Activated CD4-positive, alpha-beta T cell treated with anti-CD3 and anti-CD28 coated beads for 36 hours (primary cell): ENCODE measurements at regions of chr17 and their contacts with region 1.

Region 1: GRCh38 chr17:36545465-36546417 is 1.0 kb downstream of the GGNBP2 start:
- DNase-seq: peak; percentile 98
- ATAC-seq: peak; percentile 81
- H3K4me3 Mint-ChIP-seq: peak overlapping the region; percentile 96
- H3K27ac Mint-ChIP-seq: peak overlapping the region; percentile 95
- H3K4me1 Mint-ChIP-seq: peaks cover 37% of the 10 kb centered on the region
- H3K27me3 Mint-ChIP-seq: no peaks in the 10 kb centered on the region

Region 2: GRCh38 chr17:35373534-35373983 is 1172.2 kb before region 1 on chr17 and contains the start of gene SLFN11:
- CTCF ChIA-PET with region 1: no interaction called
- POLR2A ChIA-PET with region 1: no interaction called
- intact Hi-C with region 1: loop called in 1 of 2 experiments (anchors 10 kb)
- DNase-seq: peak; percentile 95
- ATAC-seq: peak; percentile 70
- H3K4me3 Mint-ChIP-seq: peak within 1 kb of the TSS; percentile 85
- H3K27ac Mint-ChIP-seq: peak within 1 kb of the TSS; percentile 98
- H3K4me1 Mint-ChIP-seq: peaks cover 50% of the 10 kb centered on the region
- H3K27me3 Mint-ChIP-seq: peaks cover 1% of the 10 kb centered on the region
- total RNA-seq, gene SLFN11: 63.7 to 67.9 TPM

Region 3: DNA sequence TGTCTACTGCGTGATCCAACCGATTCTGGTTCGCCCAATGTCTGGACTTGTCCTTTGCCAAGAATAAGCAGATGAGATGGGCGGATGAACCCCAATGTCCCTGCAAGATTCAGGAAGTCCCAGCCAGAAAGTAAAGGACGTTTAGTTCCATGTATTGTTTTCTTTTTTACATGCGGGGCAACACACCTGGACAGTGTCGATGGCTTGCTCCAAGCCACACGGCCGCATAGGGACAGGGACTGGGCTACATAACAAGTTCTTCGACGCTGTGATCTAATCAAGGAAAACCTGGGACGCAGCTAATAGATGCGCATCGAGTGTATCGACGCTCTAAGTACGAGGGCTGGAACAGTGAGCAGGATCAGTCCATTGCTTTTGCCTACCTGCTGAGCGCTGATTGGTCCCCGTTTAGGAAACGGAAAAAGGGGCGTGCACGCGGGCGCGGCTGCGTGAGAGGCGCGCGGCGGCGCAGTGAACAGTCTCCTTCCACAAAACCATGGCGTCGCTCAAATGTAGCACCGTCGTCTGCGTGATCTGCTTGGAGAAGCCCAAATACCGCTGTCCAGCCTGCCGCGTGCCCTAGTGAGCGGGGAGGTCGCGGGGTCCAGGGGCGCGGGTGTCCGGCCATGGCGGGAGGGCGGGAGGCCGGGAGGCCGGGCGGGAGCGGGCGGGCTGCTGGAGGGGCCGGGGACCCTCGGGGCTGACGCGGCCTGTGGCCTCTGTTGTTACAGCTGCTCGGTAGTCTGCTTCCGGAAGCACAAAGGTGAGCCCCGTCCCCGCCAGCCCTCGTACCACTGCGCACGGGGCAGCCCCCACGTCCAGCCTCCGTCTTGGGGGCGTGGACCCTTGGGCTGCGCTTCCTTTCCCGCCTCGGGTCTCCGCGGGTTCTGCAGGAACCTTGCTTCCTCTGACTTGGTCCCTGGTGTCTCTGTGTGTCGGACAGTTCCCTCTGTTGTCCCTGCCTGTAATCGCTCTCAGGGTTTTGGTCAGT is 59.2 kb before region 1 on chr17 and contains the start of gene ZNHIT3:
- CTCF ChIA-PET with region 1: interaction called, 4 read pairs
- POLR2A ChIA-PET with region 1: interaction called, 5 read pairs
- intact Hi-C with region 1: loop called in 1 of 2 experiments (anchors 1 kb)
- DNase-seq: peak; percentile 95
- ATAC-seq: peak; percentile 94
- H3K4me3 Mint-ChIP-seq: peak within 1 kb of the TSS; percentile 84
- H3K27ac Mint-ChIP-seq: peak within 1 kb of the TSS; percentile 96
- H3K4me1 Mint-ChIP-seq: peaks cover 50% of the 10 kb centered on the region
- H3K27me3 Mint-ChIP-seq: peaks cover 10% of the 10 kb centered on the region
- total RNA-seq, gene ZNHIT3: 38.2 to 42.3 TPM

Region 4: DNA sequence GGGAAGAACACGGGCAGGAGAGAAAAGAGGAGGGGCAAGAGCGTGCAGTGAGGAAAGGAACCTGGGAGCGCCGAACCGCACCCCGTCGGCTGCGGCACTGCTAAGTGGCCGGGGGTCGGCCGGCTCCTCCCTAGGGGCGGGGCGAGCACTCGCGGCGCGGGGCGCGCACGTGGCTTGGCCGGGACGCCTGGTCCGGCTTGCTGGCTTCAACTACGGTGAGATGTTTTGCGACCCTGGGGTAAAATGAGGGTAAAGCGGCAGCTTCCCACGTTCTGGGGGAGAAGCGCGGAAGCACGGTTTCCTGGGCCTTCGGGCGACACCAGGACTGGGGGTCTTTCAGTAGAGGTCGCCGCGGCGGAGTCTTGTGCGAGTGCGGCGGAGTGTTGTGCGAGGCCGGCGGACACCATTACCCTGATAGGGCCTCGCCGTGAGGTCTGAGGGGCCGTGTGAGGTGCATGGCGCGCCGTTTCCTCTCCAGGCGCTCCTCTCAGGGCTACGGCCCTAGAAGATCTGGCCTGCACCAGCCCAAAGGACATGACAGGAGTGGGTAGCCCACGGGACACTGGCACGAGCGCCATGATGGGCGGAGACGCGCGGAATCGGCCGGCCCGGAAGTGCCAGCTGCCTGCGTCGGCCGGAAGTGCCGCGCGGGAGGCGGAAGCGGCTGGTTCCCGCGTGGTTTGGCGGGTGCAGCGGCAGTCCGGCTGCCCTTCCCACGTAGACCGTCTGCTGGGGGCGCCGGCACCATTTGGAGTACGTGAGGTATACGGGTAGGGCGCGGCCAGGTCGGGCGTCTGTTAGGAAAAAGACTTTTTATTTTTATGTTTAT is 10.7 kb before region 1 on chr17 and contains the starts of genes MYO19 and PIGW:
- CTCF ChIA-PET with region 1: interaction called, 10 read pairs
- POLR2A ChIA-PET with region 1: interaction called, 35 read pairs
- intact Hi-C with region 1: loop called (anchors 1 kb)
- DNase-seq: peak; percentile 91
- ATAC-seq: peak; percentile 84
- H3K4me3 Mint-ChIP-seq: peak within 1 kb of the TSS; percentile 98
- H3K27ac Mint-ChIP-seq: peak within 1 kb of the TSS; percentile 99
- H3K4me1 Mint-ChIP-seq: peaks cover 39% of the 10 kb centered on the region
- H3K27me3 Mint-ChIP-seq: no peaks in the 10 kb centered on the region
- total RNA-seq, gene MYO19: 110 to 127 TPM
- total RNA-seq, gene PIGW: 11.8 to 13.4 TPM

Region 5: GRCh38 chr17:36601303-36602029 is 55.7 kb after region 1 on chr17 and contains the start of gene MRM1:
- CTCF ChIA-PET with region 1: interaction called, 15 read pairs
- POLR2A ChIA-PET with region 1: interaction called, 6 read pairs
- intact Hi-C with region 1: loop called in 1 of 2 experiments (anchors 1 kb)
- DNase-seq: peak; percentile 93
- ATAC-seq: peak; percentile 86
- H3K4me3 Mint-ChIP-seq: peak within 1 kb of the TSS; percentile 89
- H3K27ac Mint-ChIP-seq: peak within 1 kb of the TSS; percentile 92
- H3K4me1 Mint-ChIP-seq: peaks cover 33% of the 10 kb centered on the region
- H3K27me3 Mint-ChIP-seq: no peaks in the 10 kb centered on the region
- total RNA-seq, gene MRM1: 14.3 to 16.4 TPM

Region 6: DNA sequence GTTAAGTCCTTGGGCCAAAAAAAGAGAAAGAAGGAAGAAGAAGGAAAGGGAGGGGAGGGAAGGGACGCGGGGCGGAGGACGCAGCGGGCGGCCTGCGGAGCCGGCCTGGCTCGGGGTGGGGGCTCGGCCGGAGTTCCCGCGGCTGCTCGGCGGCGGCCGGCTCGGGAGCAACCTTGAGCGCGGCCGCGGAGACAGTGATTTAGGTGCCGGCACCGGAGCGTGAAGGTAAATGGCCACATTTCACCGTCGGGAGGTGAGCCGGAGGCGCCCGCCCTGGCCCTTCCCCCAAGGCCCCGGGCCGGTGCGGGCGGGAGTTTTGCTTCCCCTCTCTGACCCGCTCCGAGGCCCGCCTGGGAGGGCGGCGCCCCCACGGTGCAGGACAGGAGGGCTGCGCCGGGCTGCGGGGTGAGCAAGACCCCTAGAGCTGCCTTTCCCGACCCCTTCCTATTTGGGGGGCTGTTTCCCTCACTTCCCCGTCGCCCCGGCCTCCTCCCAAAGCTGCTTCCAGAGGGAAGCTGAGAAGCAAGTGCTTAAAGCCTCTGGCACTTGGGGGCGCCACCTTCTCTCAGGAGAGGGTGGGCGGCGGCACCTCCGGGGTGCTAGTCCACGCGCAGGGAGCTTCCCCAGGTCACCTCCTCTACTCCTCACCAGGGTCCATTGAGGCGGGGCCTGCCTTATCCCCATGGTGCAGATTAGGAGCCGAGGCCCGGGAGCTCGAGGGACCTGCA is 112.2 kb after region 1 on chr17:
- CTCF ChIA-PET with region 1: no interaction called
- POLR2A ChIA-PET with region 1: no interaction called
- intact Hi-C with region 1: no loop called
- DNase-seq: peak; percentile 56
- ATAC-seq: peak; percentile 23
- H3K4me3 Mint-ChIP-seq: peak overlapping the region; percentile 28
- H3K27ac Mint-ChIP-seq: no peak overlapping the region
- H3K4me1 Mint-ChIP-seq: peaks cover 2% of the 10 kb centered on the region
- H3K27me3 Mint-ChIP-seq: peaks cover 41% of the 10 kb centered on the region

Region 7: GRCh38 chr17:36728030-36728991 is 182.6 kb after region 1 on chr17:
- CTCF ChIA-PET with region 1: no interaction called
- POLR2A ChIA-PET with region 1: no interaction called
- intact Hi-C with region 1: no loop called
- DNase-seq: peak; percentile 65
- ATAC-seq: peak; percentile 69
- H3K4me3 Mint-ChIP-seq: peak overlapping the region; percentile 22
- H3K27ac Mint-ChIP-seq: peak overlapping the region; percentile 11
- H3K4me1 Mint-ChIP-seq: peaks cover 42% of the 10 kb centered on the region
- H3K27me3 Mint-ChIP-seq: no peaks in the 10 kb centered on the region

Region 8: DNA sequence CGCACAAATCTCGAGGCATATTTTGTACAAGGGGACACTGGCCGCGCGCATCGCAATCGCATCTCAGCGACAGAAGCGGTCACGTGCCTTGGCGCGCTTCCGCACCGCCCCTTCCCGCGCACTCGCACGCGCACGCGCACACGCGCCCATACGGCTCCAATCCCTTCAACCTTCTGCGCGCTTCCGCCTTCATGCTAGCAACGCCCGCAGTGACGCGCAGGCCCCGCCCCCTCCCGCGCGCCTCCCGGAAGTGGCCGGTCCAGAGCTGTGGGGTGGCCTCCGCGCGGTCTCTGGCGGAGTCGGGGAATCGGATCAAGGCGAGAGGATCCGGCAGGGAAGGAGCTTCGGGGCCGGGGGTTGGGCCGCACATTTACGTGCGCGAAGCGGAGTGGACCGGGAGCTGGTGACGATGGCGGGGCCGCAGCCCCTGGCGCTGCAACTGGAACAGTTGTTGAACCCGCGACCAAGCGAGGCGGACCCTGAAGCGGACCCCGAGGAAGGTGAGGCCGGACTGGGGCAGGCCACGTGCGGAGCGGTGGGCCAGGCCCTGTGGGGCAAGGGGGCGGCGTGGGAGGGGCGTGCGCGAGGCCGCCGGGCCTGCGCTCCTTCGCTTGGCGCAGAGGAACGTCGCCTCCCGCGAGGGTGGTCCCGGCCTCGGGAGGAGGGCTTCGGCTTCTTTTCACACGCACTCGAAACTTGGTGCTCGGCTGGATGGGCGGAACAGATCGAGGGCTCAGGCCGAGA is 403.1 kb after region 1 on chr17 and contains the start of gene AATF:
- CTCF ChIA-PET with region 1: no interaction called
- POLR2A ChIA-PET with region 1: no interaction called
- intact Hi-C with region 1: loop called in 1 of 2 experiments (anchors 2 kb)
- DNase-seq: peak; percentile 97
- ATAC-seq: peak; percentile 99
- H3K4me3 Mint-ChIP-seq: peak within 1 kb of the TSS; percentile 90
- H3K27ac Mint-ChIP-seq: peak within 1 kb of the TSS; percentile 94
- H3K4me1 Mint-ChIP-seq: peaks cover 47% of the 10 kb centered on the region
- H3K27me3 Mint-ChIP-seq: peaks cover 28% of the 10 kb centered on the region
- total RNA-seq, gene AATF: 87.9 to 149 TPM

Region 9: DNA sequence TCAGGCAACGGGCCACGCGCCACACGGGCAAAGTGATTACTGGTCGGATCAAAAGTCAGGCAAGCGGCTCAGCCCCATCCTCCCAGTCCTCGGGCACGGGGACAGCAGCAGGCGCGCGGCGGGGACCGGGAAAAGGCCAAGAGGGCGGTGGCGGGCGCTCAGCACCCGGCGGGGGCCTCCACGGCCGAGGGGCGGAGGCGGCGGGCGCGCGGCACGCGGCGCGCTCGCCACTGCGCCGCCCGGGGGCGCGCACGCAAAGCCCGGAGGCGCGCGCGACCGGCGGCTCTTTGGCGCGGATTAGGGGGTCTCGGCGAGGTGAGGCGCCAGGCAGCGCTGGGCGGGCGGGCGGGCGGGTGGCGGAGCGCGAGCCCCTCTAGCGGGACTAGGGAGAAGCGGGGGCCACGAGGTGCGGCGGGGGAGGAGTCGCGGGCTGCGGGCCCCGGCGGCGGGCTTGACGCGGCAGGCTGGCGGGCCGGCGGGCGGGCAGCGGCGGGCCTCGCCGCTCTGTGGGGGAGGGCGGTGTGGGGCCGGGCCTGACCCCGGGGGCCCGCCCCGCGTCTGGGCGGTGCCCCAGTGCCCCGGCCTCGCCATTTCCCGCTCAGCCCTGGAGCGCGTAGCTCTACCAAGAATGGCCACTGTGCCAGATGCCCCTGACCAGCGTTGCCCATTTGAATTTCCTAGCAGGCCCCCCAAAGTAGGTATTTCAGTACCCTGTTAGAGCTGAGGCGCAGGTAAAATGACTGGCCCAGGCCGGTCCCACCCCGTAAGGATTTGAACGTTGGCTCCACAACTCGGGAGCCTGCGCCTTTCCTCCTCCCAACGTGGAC is 861.1 kb after region 1 on chr17 and contains the starts of genes ACACA and TADA2A:
- CTCF ChIA-PET with region 1: no interaction called
- POLR2A ChIA-PET with region 1: no interaction called
- intact Hi-C with region 1: loop called in 1 of 2 experiments (anchors 2 kb)
- DNase-seq: peak; percentile 88
- ATAC-seq: peak; percentile 93
- H3K4me3 Mint-ChIP-seq: peak within 1 kb of the TSS; percentile 99
- H3K27ac Mint-ChIP-seq: peak within 1 kb of the TSS; percentile 98
- H3K4me1 Mint-ChIP-seq: peaks cover 46% of the 10 kb centered on the region
- H3K27me3 Mint-ChIP-seq: no peaks in the 10 kb centered on the region
- total RNA-seq, gene ACACA: 57.2 to 61.1 TPM
- total RNA-seq, gene TADA2A: 29.9 to 32.9 TPM